Activated CD8-positive, alpha-beta T cell treated with anti-CD3 and anti-CD28 coated beads for 36 hours (primary cell): ENCODE measurements at regions of chr1 and their contacts with region 1.

Region 1: GRCh38 chr1:59879574-59879973 is 47.0 kb downstream of the CYP2J2 start:
- DNase-seq: peak; percentile 81
- ATAC-seq: peak; percentile 74
- H3K4me3 Mint-ChIP-seq: no peak overlapping the region
- H3K27ac Mint-ChIP-seq: no peak overlapping the region
- H3K4me1 Mint-ChIP-seq: peaks cover 2% of the 10 kb centered on the region
- H3K27me3 Mint-ChIP-seq: no peaks in the 10 kb centered on the region
- CTCF ChIP-seq: peak; percentile 28

Region 2: DNA sequence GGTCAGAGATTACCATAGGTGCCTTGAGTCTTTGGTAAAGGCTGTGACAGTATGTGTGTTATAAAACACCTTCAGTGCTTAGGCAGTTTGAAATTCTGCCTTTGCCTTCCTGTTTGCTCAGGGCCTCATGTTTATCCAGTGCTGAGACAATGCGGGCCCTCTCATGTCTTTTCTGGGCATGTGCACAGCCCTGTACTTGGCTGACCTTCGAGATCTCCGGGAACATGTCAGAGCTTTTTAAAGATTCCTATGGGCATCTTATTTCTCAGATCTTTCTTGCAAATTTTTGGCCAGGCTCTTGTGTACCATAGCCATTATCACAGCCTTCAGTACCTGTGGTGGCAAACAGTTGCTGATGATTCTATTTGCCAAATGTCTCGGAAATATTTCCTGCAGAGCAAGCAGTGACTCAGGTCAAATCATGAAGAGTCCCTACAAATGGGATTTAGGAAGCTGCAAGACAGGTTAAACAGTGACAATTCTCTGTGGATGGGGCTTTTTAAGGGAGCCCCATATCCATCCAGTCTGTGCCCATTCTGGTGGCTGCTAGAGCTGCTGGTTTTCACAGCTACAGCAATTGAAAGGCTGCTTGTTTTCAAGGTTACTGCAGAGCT is 22.7 kb before region 1 on chr1:
- CTCF ChIA-PET with region 1: interaction called, 10 read pairs
- POLR2A ChIA-PET with region 1: no interaction called
- intact Hi-C with region 1: no loop called
- DNase-seq: no peak
- ATAC-seq: no peak
- H3K4me3 Mint-ChIP-seq: no peak overlapping the region
- H3K27ac Mint-ChIP-seq: no peak overlapping the region
- H3K4me1 Mint-ChIP-seq: no peaks in the 10 kb centered on the region
- H3K27me3 Mint-ChIP-seq: no peaks in the 10 kb centered on the region
- CTCF ChIP-seq: no peak